ENCODE measurements at regions of chr19 and their contacts with region 1.

Region 1: DNA sequence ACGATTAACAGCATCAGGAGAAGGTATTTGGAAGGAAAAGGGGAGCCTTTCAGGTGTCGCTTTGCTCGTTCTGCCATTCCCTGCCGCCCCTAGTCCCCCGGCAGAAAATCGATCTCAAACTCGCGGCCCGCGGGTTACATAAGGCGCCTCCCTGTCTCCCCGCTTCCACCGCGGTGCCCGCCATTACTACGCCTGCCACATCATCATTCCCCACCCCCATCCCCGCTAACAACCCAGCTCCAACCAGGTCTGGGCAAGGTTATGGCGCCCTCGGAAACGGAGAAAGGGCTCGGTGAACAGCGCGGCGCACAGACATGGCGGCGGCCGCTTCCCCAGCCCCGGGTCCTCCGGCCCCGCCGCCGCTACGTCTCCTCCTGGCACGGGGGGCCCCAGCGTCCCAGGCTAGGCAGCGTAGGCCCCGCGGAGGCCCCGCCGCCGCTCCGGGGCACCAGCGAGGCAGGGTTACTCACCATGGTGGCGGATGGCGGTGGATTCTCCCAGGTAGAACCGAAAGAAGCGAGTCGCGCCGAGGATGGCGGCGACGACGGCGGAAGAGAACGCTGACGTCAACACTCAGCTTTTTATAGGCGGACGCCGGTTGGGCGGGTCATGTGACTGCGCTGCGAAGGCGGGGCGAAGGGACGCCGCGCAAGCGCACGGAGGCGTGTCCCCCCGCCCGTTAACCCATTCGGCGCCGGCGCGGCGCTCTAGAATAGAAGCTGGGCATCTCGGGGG is at the start of gene EEF2:
- DNase-seq: peak; percentile 95
- H3K4me3 ChIP-seq: peak within 1 kb of the TSS; percentile 70 to 86 (median 82)
- H3K27ac ChIP-seq: peak within 1 kb of the TSS; percentile 92 to 96 (median 94)
- H3K4me1 ChIP-seq: peaks cover 0 to 62% (median 49%) of the 10 kb centered on the region in 4 donors
- H3K27me3 ChIP-seq: no peaks in the 10 kb centered on the region
- CTCF ChIP-seq: no peak
- EP300 ChIP-seq: peak in 2 of 4 donors; percentile 9 to 23
- POLR2A ChIP-seq: peak; percentile 99
- total RNA-seq, gene EEF2: 1,842 to 2,448 (median 2,055) TPM

Region 2: GRCh38 chr19:3914199-3914598 is 70.9 kb before region 1 on chr19:
- intact Hi-C with region 1: no loop called
- DNase-seq: no peak
- H3K4me3 ChIP-seq: no peak overlapping the region
- H3K27ac ChIP-seq: no peak overlapping the region
- H3K4me1 ChIP-seq: no peaks in the 10 kb centered on the region
- H3K27me3 ChIP-seq: no peaks in the 10 kb centered on the region
- CTCF ChIP-seq: no peak
- EP300 ChIP-seq: no peak
- POLR2A ChIP-seq: no peak

Region 3: DNA sequence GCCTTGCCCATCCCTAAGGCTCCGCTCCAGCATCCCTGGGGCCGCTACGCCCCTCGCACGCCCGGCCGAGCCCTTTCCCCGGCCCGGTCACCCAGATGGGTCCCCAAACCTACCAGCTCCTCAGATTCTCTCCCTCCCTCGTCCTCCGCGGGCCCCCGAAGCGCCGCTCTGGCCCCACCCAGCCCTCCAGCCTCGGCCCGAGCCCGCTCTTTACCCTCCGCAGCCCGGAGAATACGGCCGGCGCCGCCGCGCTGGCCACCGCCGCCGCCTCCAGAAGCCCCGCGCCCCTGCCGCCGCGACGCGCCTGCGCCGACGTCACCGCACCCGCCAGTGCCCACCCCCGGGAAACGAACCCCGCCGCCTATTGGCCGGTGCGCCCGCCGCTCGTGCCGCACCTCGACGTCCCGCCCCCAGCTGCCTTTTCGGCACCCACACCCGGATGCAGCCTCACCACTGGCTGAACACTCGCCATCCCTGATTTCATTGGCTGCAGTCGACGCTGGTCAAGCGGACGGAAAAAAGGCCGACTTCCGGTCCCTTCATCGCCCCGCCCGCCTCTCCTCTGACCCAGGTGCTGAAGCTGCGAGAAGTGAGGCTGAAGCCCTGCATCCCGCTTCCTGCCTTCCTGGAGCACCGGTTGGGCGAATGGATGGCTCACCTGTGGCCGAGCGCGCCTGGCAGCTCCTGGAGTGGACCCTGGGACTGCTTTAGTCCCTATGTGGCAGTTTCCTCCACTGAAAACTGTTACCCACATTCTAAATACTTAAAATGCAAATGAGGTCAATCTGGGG is 14.1 kb before region 1 on chr19 and contains the start of gene DAPK3:
- intact Hi-C with region 1: loop called (anchors 2 kb)
- DNase-seq: peak; percentile 99
- H3K4me3 ChIP-seq: peak within 1 kb of the TSS; percentile 95 to 100 (median 98)
- H3K27ac ChIP-seq: peak within 1 kb of the TSS; percentile 100
- H3K4me1 ChIP-seq: peaks cover 0 to 48% (median 42%) of the 10 kb centered on the region in 4 donors
- H3K27me3 ChIP-seq: no peaks in the 10 kb centered on the region
- CTCF ChIP-seq: no peak
- EP300 ChIP-seq: no peak
- POLR2A ChIP-seq: peak; percentile 80 to 93
- total RNA-seq, gene DAPK3: 91.3 to 167 (median 125) TPM

Region 4: DNA sequence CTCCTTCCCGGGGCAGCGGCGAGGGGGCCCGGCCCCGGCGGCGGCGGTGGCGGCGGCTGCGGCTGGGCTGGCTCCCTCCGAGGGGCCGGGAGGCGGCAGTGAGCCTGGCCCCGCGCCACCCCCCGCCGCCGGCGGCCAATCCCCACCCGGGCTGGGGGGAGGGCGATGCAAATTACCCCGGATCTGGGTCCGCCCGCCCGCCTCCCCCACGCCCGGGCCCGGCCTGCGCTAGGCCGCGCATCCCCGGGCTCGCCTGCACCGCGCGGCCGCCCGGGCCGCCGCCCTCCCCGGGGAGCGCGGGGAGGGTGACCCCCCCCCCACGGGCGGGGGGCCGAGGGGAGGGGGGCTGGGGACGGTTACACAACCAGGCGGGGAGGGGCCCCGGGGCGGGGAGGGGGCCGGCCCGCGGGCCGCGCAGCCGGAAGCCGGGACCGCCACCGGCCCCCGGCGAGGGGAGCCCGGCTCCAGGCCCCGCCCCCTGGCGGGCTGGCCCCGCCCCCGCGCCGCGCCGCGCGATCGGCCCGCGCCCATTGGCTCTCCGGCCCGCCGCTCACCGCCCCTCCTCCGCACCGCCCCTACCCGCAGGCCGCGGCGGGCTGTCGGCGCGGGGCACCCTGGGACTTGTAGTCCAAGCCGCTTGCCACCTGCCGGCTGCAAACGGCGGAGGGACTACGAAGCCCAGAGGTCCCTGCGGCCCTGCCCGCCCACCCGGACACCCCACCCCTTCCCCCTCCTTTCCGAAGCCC is 80.5 kb after region 1 on chr19:
- intact Hi-C with region 1: loop called (anchors 5 kb)
- DNase-seq: peak; percentile 99
- H3K4me3 ChIP-seq: peak overlapping the region; percentile 89 to 100 (median 94)
- H3K27ac ChIP-seq: peak overlapping the region; percentile 99 to 100 (median 100)
- H3K4me1 ChIP-seq: peaks cover 0 to 54% (median 45%) of the 10 kb centered on the region in 4 donors
- H3K27me3 ChIP-seq: no peaks in the 10 kb centered on the region
- CTCF ChIP-seq: no peak
- EP300 ChIP-seq: no peak
- POLR2A ChIP-seq: no peak

Region 5: DNA sequence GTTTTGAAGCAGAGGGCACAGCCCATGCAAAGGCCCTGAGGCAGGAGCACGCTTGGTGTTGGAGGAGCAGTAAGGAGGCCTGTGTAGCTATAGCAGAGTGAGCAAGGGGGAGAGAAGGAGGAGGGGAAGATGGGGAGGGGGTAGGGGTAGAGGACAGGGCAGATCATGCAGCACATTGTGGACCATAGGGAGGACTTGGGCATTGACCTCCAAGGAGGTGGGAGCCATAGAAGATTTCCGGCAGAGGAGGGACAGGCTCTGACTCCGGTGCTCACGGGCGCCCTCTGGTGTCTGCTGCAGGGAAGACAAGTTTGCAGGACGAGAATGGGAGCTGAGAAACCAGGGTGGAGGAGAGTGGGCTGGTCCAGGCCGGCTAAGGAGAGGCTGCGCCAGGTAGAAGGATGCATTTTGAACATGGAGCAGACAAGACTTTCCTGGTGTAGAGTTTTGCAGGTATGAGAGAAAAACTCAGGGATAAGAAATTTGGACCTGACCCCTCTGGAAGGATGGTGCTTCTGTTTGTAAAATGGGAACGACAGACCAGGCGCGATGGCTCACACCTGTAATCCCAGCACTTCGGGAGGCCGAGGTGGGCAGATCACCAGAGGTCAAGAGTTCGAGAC is 154.7 kb after region 1 on chr19:
- intact Hi-C with region 1: loop called (anchors 2 kb)
- DNase-seq: peak; percentile 82
- H3K4me3 ChIP-seq: no peak overlapping the region
- H3K27ac ChIP-seq: no peak overlapping the region
- H3K4me1 ChIP-seq: peaks cover 0 to 7% (median 0%) of the 10 kb centered on the region in 4 donors
- H3K27me3 ChIP-seq: no peaks in the 10 kb centered on the region
- CTCF ChIP-seq: peak; percentile 45 to 81 (median 55)
- EP300 ChIP-seq: no peak
- POLR2A ChIP-seq: no peak

Region 6: GRCh38 chr19:4208385-4209094 is 223.5 kb after region 1 on chr19:
- intact Hi-C with region 1: loop called (anchors 2 kb)
- DNase-seq: no peak
- H3K4me3 ChIP-seq: no peak overlapping the region
- H3K27ac ChIP-seq: no peak overlapping the region
- H3K4me1 ChIP-seq: peaks cover 0 to 7% (median 0%) of the 10 kb centered on the region in 4 donors
- H3K27me3 ChIP-seq: peaks cover 0 to 19% (median 2%) of the 10 kb centered on the region in 3 donors
- CTCF ChIP-seq: no peak
- EP300 ChIP-seq: no peak
- POLR2A ChIP-seq: no peak